Left lung (tissue), 14 donors: ENCODE measurements at regions of chr13 and their contacts with region 1.

Region 1: GRCh38 chr13:51959773-51960172 is 51.5 kb downstream of the ATP7B start:
- DNase-seq: no peak
- ATAC-seq: no peak
- H3K4me3 ChIP-seq: no peak overlapping the region
- H3K27ac ChIP-seq: no peak overlapping the region
- H3K4me1 ChIP-seq: no peaks in the 10 kb centered on the region
- H3K27me3 ChIP-seq: no peaks in the 10 kb centered on the region
- CTCF ChIP-seq: no peak

Region 2: GRCh38 chr13:52141297-52141696 is 181.5 kb after region 1 on chr13:
- intact Hi-C with region 1: loop called in 1 of 2 experiments (anchors 5 kb)
- DNase-seq: no peak
- ATAC-seq: no peak
- H3K4me3 ChIP-seq: no peak overlapping the region
- H3K27ac ChIP-seq: no peak overlapping the region
- H3K4me1 ChIP-seq: no peaks in the 10 kb centered on the region
- H3K27me3 ChIP-seq: no peaks in the 10 kb centered on the region
- CTCF ChIP-seq: no peak